Heart right ventricle (tissue), 16 donors: ENCODE measurements at regions of chr6 and their contacts with region 1.

Region 1: DNA sequence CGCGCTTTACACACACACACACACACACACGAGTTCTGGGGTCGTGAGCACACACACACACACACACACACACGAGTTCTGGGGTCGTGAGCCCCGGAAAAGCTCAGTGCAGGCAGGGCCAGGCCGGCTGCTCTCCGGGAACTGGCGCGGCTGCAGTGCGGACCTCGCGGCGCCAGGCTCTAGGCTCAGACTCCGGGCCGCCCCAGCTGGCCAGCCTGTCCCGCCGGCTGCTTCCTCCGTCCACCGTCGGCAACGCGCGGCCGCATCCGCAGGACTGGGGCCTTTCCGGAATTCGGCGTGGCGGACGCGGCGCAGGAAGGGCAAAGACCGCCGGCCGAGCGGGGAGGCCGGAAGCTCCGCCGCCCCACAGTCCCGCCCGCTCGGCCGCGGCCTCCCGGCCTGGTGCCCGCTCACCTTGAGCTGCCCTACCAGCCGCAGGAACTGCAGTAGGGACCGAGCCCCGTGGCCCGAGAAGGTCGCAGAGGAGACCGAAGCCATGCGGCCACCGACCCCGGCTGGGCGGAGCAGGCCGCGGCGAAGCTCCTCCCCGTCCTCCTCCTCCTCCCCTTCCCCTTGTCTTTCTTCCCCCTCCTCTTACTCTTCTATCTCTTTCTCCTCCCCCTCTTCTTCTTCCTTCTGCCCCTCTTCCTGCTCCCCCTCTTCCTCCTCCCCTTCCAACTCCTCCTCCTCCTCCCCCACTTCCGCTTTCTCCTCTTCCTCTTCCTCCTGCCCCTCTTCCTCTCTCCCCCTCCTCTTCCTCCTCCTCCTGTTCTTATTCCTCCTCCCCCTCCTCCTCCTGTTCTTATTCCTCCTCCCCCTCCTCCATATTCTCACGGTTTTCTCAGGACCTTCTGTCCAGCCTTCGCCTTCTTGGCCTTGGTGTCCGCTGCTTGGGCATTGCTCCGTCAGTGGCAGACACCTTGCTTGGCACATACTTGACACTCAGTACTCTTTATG is at the start of gene HDDC2:
- DNase-seq: peak; percentile 80 to 84
- ATAC-seq: peak; percentile 87 to 96 (median 92)
- H3K4me3 ChIP-seq: peak within 1 kb of the TSS; percentile 52 to 84 (median 76)
- H3K27ac ChIP-seq: peak within 1 kb of the TSS; percentile 86 to 97 (median 95)
- H3K4me1 ChIP-seq: peaks cover 0 to 37% (median 20%) of the 10 kb centered on the region in 9 donors
- H3K27me3 ChIP-seq: no peaks in the 10 kb centered on the region
- CTCF ChIP-seq: peak in 1 of 9 donors; percentile 4
- total RNA-seq, gene HDDC2: 70.9 to 107 (median 95.1) TPM

Region 2: DNA sequence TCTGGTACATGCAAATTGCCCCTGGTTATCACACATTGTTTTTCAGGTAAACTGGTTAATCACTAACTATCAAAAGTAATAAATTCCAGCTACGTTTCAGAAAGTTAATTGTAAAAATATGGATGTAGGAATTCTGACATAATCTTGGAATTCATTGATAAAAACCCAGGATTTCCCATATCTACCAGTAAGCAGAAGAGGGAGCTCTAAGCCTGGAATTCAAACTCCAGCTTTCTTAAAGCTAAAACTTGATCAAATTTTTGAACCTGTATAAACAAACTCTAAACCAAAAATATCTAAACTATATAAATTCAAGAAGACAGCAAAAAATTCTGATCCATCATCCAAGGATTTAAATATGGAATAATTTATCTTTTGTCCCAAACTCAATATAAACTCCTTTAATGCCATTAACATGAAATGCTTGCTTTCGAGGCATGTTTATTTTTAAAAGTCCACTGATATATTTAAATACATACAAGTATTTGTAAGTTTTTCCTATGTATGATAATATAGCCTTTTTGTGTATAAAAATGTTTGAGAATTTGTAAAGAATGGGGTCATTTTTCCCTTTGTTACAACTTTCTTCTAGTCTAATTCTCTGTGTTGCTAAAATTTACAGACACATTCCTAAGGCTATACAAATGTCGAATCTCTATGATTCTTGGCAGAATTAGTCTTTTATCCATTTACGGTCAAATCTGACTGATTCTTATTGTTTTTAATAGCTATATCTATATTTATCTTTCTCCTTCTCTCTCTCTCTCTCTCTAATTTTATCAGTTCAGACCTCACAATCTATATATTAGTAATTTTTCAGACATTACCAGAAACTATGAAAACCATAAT is 430.9 kb before region 1 on chr6:
- intact Hi-C with region 1: loop called in 1 of 10 experiments (anchors 10 kb)
- DNase-seq: no peak
- ATAC-seq: no peak
- H3K4me3 ChIP-seq: no peak overlapping the region
- H3K27ac ChIP-seq: no peak overlapping the region
- H3K4me1 ChIP-seq: no peaks in the 10 kb centered on the region
- H3K27me3 ChIP-seq: no peaks in the 10 kb centered on the region
- CTCF ChIP-seq: peak; percentile 44 to 87 (median 77)

Region 3: GRCh38 chr6:125140808-125141207 is 160.9 kb before region 1 on chr6:
- intact Hi-C with region 1: no loop called
- DNase-seq: no peak
- ATAC-seq: no peak
- H3K4me3 ChIP-seq: no peak overlapping the region
- H3K27ac ChIP-seq: no peak overlapping the region
- H3K4me1 ChIP-seq: no peaks in the 10 kb centered on the region
- H3K27me3 ChIP-seq: no peaks in the 10 kb centered on the region
- CTCF ChIP-seq: no peak

Region 4: DNA sequence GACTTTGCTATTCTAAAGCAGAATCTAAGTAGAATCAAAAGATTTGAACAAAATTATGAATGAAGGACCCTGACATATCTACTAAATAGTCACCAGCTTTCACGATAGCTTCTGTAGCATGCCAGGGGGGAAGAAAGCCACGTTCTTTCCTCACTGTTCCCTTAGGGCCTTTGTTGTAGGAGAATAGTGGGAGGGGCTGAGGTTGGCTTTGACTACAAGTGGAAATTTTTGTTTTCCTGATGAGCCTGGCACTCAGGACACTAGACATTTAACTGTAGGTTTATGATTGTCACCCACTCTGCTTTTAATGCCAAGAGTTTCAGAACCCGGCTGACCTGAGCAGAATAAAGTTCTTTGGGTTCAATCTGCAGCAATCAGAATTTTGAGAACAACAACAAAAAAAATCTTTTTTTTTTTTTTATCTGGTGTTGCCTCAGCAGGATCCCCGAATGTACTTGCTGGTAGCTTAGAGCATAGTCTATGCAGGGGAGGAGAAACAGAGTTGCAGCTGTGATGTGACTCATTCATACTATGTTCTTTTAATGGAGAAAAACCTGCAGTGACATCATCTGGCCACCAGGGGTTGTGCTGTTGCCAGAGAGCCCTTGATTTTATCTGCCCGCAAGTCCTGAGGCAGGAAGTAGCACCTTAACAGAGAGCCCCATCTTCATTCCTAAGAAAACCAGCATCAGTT is 109.7 kb before region 1 on chr6:
- intact Hi-C with region 1: loop called in 4 of 10 experiments (anchors 2 to 10 kb)
- DNase-seq: peak; percentile 20 to 36
- ATAC-seq: peak in 7 of 8 donors; percentile 24 to 81 (median 66)
- H3K4me3 ChIP-seq: no peak overlapping the region
- H3K27ac ChIP-seq: no peak overlapping the region
- H3K4me1 ChIP-seq: peaks cover 4 to 69% (median 46%) of the 10 kb centered on the region in 9 donors
- H3K27me3 ChIP-seq: no peaks in the 10 kb centered on the region
- CTCF ChIP-seq: peak; percentile 66 to 84 (median 69)

Region 5: DNA sequence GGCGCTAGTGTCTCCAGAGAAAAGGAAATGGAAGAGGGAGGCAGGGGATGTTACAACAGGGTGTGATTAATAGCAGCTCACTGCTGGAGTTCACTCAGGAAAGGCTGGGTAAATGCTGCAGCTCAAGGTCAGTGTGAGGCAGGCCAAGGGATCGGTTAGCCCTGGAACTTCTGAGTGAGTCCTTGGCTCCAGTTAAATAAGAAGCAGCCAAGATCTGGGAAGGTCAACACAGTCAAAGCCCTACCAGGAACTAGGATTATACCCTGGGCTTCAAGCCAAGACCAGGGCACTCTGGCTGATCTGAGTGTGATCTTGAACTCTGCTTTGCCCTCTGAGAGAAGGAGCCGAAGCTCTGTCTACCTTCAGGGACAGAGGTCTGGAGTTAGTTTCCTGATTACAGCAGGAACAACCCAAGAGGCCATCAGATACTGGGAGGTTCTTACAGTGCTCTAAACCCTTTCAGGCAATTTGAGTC is 103.9 kb before region 1 on chr6:
- intact Hi-C with region 1: loop called in 3 of 10 experiments (anchors 5 to 10 kb)
- DNase-seq: peak; percentile 37 to 71
- ATAC-seq: peak; percentile 89 to 98 (median 92)
- H3K4me3 ChIP-seq: peak overlapping the region in 1 of 10 donors; percentile 8
- H3K27ac ChIP-seq: peak overlapping the region; percentile 48 to 92 (median 80)
- H3K4me1 ChIP-seq: peaks cover 0 to 71% (median 50%) of the 10 kb centered on the region in 9 donors
- H3K27me3 ChIP-seq: no peaks in the 10 kb centered on the region
- CTCF ChIP-seq: no peak

Region 6: DNA sequence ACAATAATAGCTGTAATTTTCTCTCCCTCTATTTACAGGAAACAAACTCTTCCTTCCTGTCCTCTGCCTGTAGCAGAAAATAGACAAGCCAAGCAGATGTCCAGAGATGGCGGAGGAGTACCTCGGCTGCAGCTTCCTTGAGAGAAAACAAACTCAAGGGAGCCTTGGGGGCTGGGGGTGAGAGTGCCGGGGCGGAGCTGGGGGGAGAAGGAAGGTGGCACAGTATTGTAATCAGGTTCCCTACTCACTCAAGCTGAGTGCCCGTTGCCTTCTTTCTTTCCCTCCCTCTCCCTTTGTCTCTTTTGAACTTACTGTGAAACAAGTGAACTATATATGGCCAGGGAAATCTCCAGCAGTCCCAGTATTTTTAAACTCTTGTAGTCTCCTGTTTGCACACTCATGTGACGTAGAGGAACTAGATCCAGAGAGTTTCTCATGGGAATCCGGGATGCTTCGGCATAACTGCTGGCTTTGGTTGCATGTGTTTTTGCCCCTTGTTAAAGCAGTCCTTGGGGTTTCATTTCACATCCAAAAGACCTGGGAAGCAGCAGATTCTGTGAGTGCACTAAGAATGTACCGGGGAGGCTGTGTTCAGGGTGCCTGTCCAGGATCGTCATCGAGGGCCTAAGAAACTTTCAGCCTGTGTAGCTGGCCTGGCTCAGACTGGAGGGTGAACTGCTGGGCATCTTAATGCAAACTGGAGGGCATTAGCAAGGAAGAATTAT is 44.6 kb after region 1 on chr6:
- intact Hi-C with region 1: no loop called
- DNase-seq: peak in 1 of 2 donors; percentile 37
- ATAC-seq: peak; percentile 22 to 89 (median 76)
- H3K4me3 ChIP-seq: peak overlapping the region in 6 of 10 donors; percentile 4 to 31 (median 16)
- H3K27ac ChIP-seq: peak overlapping the region; percentile 22 to 77 (median 65)
- H3K4me1 ChIP-seq: peaks cover 0 to 14% (median 6%) of the 10 kb centered on the region in 9 donors
- H3K27me3 ChIP-seq: peaks cover 0 to 5% (median 0%) of the 10 kb centered on the region in 7 donors
- CTCF ChIP-seq: no peak